ACHN (cell line): ENCODE measurements at regions of chr16 and their contacts with region 1.

Region 1: GRCh38 chr16:55842369-55843104 is 9.6 kb upstream of the CES1 start:
- DNase-seq: peak; percentile 60

Region 2: DNA sequence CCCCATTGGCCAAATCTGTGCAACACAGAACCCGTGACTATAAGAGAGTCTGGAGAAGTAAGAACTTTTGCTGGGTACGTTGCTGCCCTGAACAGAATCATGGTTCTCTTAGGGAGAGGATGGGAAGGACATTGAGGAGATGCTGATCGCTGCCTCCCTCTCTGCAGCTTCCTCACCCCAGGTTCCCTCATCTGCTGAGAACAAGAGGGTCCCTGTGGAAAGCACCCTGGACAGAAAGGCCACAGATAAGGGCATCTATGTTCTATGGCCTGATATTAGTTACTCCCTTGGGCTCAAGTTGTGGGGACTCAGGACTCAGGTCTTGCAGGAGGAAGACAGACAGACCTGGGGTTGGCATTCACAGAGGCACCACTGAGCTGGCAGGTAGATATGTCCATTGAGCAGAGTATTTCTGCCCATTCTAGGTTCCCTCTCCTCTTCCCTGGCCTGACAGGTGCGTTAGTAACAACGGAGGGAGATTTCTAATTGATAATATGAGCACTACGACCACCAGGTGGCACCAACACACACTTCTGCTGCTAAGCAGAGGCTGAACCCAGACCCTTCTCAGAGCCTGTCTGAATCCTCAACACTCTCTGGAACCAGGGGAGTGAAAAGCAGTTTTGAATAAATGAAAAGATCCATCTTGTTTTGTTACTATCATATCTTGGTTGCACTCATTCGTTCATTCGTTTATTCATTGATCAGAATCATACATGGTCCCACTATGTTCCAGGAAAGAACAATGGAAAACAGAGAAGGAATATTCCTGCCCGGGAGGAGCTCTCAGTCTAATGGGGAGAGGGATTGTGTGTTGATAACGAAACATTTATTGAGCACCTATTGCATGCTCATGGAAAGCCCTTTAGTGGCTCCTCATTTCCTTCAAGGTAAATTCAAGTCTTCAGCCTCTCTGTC is 130.3 kb before region 1 on chr16:
- in situ Hi-C with region 1: loop called (anchors 25 kb)
- DNase-seq: peak; percentile 60